Heart left ventricle (tissue), 16 donors: ENCODE measurements at regions of chr17 and their contacts with region 1.

Region 1: GRCh38 chr17:850851-851763 is 69.0 kb downstream of the MRM3 start:
- DNase-seq: peak in 4 of 5 donors; percentile 33 to 53 (median 40)
- ATAC-seq: peak in 3 of 4 donors; percentile 43 to 64 (median 46)
- H3K4me3 ChIP-seq: peak overlapping the region in 8 of 12 donors; percentile 16 to 37 (median 22)
- H3K27ac ChIP-seq: peak overlapping the region; percentile 29 to 86 (median 56)
- H3K4me1 ChIP-seq: peaks cover 0 to 54% (median 24%) of the 10 kb centered on the region in 12 donors
- H3K27me3 ChIP-seq: no peaks in the 10 kb centered on the region
- CTCF ChIP-seq: no peak
- POLR2A ChIP-seq: no peak

Region 2: DNA sequence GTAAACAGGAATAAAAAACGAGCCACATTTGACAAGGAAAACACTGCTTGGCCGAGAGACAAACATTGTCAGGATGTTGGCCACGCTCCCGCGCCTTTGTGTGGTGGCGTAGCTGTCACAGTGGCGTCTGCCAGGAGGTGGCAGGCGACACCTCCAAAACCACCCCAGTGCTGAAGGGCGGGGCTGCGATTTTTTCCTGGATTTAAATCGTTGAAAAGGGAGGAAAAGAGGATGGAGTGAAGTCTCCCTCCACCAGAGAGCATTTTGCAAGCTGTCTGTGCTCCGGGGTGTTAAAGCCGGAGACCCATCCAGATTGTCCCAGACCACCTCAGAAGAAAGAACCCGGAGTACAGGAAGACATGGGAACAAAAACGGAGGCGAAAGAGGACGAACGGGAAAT is 56.2 kb before region 1 on chr17:
- intact Hi-C with region 1: loop called in 3 of 10 experiments (anchors 1 to 10 kb)
- DNase-seq: peak; percentile 85 to 91 (median 88)
- ATAC-seq: peak; percentile 47 to 81 (median 63)
- H3K4me3 ChIP-seq: peak overlapping the region in 11 of 12 donors; percentile 14 to 55 (median 43)
- H3K27ac ChIP-seq: peak overlapping the region in 10 of 12 donors; percentile 4 to 74 (median 51)
- H3K4me1 ChIP-seq: peaks cover 0 to 30% (median 10%) of the 10 kb centered on the region in 12 donors
- H3K27me3 ChIP-seq: no peaks in the 10 kb centered on the region
- CTCF ChIP-seq: peak; percentile 73 to 97 (median 89)
- POLR2A ChIP-seq: no peak

Region 3: GRCh38 chr17:915538-916201 is 64.6 kb after region 1 on chr17:
- intact Hi-C with region 1: loop called in 1 of 10 experiments (anchors 2 kb)
- DNase-seq: peak in 4 of 5 donors; percentile 61 to 76 (median 66)
- ATAC-seq: peak; percentile 54 to 83 (median 68)
- H3K4me3 ChIP-seq: peak overlapping the region in 4 of 12 donors; percentile 1 to 34 (median 14)
- H3K27ac ChIP-seq: peak overlapping the region; percentile 46 to 90 (median 78)
- H3K4me1 ChIP-seq: peaks cover 0 to 32% (median 19%) of the 10 kb centered on the region in 12 donors
- H3K27me3 ChIP-seq: no peaks in the 10 kb centered on the region
- CTCF ChIP-seq: no peak
- POLR2A ChIP-seq: no peak